H1 (cell line): ENCODE measurements at regions of chr16 and their contacts with region 1.

Region 1: GRCh38 chr16:49788572-49788971 is 67.3 kb downstream of the ZNF423 start:
- DNase-seq: no peak
- H3K4me3 ChIP-seq: no peak overlapping the region
- H3K27ac ChIP-seq: no peak overlapping the region
- H3K4me1 ChIP-seq: peaks cover 0 to 4% (median 2%) of the 10 kb centered on the region in 4 experiments; a peak in 5 of 7 replicates
- H3K27me3 ChIP-seq: no peaks in the 10 kb centered on the region
- CTCF ChIP-seq: no peak
- EP300 ChIP-seq: no peak
- POLR2A ChIP-seq: no peak
- RAD21 ChIP-seq: no peak

Region 2: DNA sequence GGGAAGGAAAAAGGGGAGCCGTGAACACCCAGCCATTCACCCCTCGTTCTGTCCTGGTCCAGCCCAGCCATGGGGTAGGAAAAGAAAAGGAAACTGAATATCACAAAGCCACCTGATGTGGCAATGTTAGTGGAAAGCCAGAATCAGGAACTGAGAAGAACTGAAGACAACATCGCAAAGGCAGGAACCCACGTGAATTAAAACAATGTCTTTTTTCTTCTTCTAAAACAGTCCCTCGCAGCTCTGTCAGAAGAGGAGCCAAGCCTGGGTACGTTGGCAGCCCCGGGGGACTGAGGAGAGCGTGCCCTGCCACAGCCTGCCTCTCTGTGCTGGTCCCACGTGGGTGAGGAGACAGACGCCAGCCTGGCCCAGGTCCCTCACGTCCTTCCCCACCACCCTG is 12.3 kb after region 1 on chr16:
- CTCF ChIA-PET with region 1: interaction called, 25 read pairs
- POLR2A ChIA-PET with region 1: interaction called, 4 read pairs
- DNase-seq: no peak
- H3K4me3 ChIP-seq: no peak overlapping the region
- H3K27ac ChIP-seq: no peak overlapping the region
- H3K4me1 ChIP-seq: peaks cover 0 to 6% (median 2%) of the 10 kb centered on the region in 4 experiments; a peak in 6 of 7 replicates
- H3K27me3 ChIP-seq: no peaks in the 10 kb centered on the region
- CTCF ChIP-seq: no peak
- EP300 ChIP-seq: no peak
- POLR2A ChIP-seq: no peak
- RAD21 ChIP-seq: no peak